IMR-90 (cell line): ENCODE measurements at regions of chr13 and their contacts with region 1.

Region 1: GRCh38 chr13:113208424-113209335 is at the start of gene PCID2:
- DNase-seq: peak; percentile 84
- ATAC-seq: peak; percentile 73
- H3K4me3 ChIP-seq: peak within 1 kb of the TSS; percentile 96
- H3K27ac ChIP-seq: peak within 1 kb of the TSS; percentile 99
- H3K4me1 ChIP-seq: peaks cover 21% of the 10 kb centered on the region
- H3K27me3 ChIP-seq: no peaks in the 10 kb centered on the region
- CTCF ChIP-seq: no peak
- POLR2A ChIP-seq: no peak; the same call in 1 of the 2 replicates
- RAD21 ChIP-seq: no peak
- total RNA-seq, gene PCID2: 72.8 and 90.9 TPM in 2 replicates

Region 2: DNA sequence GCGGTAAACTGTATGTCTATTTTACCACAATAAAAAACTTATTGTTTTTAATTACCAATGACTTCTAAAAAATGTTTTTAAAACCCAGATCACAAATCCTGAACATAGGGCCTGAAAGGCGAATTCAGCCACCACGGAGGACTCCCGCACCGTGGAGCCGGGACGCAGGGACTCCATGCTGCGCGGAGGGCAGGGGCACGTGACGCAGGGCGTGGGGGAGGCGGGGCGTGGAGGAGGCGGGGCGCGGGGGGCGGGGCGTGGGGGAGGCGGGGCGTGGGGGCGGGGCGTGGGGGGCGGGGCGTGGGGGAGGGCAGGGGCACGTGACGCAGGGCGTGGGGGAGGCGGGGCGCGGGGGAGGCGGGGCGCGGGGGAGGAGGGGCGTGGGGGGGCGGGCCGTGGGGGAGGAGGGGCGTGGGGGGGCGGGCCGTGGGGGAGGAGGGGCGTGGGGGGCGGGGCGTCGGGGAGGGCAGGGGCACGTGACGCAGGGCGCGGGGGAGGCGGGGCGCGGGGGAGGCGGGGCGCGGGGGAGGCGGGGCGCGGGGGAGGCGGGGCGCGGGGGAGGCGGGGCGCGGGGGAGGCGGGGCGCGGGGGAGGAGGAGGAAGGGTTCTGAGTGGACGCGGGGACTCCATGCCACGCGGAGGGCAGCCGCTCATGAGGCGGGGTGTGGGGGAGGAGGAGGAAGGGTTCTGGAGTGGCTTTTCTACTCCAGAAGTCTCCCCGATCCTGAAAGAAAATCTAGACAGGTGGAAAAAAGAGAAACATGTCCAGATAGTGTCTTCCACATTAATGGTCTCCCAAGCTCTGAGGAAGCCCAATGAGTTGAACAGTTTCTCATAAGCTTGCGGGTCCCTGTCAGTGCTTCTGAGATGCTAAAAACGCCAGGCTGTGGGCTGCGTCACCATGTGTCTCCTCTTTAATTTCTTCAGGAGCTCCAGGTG is 54.6 kb before region 1 on chr13:
- CTCF ChIA-PET with region 1: no interaction called
- POLR2A ChIA-PET with region 1: no interaction called
- dilution Hi-C with region 1: no loop called
- in situ Hi-C with region 1: no loop called
- intact Hi-C with region 1: loop called (anchors 2 kb)
- DNase-seq: peak; percentile 51
- ATAC-seq: peak; percentile 80
- H3K4me3 ChIP-seq: peak overlapping the region; percentile 38
- H3K27ac ChIP-seq: peak overlapping the region; percentile 68
- H3K4me1 ChIP-seq: peaks cover 11% of the 10 kb centered on the region
- H3K27me3 ChIP-seq: no peaks in the 10 kb centered on the region
- CTCF ChIP-seq: no peak
- POLR2A ChIP-seq: peak; percentile 46; the same call in 1 of the 2 replicates
- RAD21 ChIP-seq: no peak

Region 3: DNA sequence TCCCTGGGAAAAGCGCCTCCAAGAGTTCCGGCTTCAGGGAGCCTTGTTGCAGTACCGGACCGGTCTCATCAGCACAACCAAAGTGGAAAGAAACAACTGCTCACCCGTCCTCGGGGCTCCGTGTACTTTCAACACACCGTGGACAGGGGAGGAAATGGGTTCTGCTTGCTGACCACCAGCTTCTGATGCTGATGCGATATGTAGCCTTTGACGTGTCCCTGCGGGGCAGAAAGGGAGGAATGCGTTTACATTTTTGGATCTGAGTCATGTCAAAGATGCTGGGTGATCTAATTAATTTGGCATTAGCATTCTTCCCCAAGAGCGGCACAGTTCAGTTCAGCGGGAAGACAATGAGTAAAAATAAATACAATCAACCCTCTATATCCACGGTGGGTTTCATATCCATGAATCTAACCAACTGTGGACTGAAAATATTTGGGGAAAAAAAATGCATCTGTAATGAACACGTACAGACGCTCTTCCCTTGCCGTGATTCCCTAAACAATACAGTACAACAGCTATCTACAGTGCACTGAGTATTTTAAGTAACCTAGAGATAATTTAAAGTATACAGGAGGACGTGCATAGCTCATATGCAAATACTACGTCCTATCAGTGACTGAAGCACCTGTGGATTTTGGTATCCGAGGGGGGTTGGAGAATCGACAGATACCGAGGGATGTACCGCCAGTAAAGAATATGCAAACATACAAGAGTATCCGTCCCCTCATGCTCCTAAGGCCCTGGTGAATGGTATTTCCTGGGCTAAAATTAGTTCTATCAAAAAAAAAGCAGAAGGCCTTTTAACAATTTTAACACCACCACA is 30.4 kb before region 1 on chr13:
- CTCF ChIA-PET with region 1: no interaction called
- POLR2A ChIA-PET with region 1: interaction called, 3 read pairs
- dilution Hi-C with region 1: no loop called
- in situ Hi-C with region 1: no loop called
- intact Hi-C with region 1: loop called (anchors 2 kb)
- DNase-seq: peak; percentile 99
- ATAC-seq: peak; percentile 90
- H3K4me3 ChIP-seq: peak overlapping the region; percentile 31; the same call in 1 of the 2 replicates
- H3K27ac ChIP-seq: peak overlapping the region; percentile 98
- H3K4me1 ChIP-seq: peaks cover 18% of the 10 kb centered on the region
- H3K27me3 ChIP-seq: no peaks in the 10 kb centered on the region
- CTCF ChIP-seq: no peak
- POLR2A ChIP-seq: peak; percentile 96
- RAD21 ChIP-seq: peak; percentile 38; the same call in 1 of the 2 replicates